Lower leg skin (tissue), 4 donors: ENCODE measurements at regions of chr9 and their contacts with region 1.

Region 1: GRCh38 chr9:107060062-107060461 is 197.1 kb downstream of the ZNF462 start:
- DNase-seq: no peak
- H3K4me3 ChIP-seq: no peak overlapping the region
- CTCF ChIP-seq: no peak
- POLR2A ChIP-seq: no peak

Region 2: GRCh38 chr9:106393226-106393625 is 666.8 kb before region 1 on chr9:
- intact Hi-C with region 1: loop called (anchors 5 kb)
- DNase-seq: no peak
- H3K4me3 ChIP-seq: no peak overlapping the region
- CTCF ChIP-seq: no peak
- POLR2A ChIP-seq: no peak

Region 3: GRCh38 chr9:107000218-107000617 is 59.8 kb before region 1 on chr9:
- intact Hi-C with region 1: no loop called
- DNase-seq: no peak
- H3K4me3 ChIP-seq: no peak overlapping the region
- CTCF ChIP-seq: no peak
- POLR2A ChIP-seq: no peak